HAP-1 (cell line): ENCODE measurements at regions of chr1 and their contacts with region 1.

Region 1: DNA sequence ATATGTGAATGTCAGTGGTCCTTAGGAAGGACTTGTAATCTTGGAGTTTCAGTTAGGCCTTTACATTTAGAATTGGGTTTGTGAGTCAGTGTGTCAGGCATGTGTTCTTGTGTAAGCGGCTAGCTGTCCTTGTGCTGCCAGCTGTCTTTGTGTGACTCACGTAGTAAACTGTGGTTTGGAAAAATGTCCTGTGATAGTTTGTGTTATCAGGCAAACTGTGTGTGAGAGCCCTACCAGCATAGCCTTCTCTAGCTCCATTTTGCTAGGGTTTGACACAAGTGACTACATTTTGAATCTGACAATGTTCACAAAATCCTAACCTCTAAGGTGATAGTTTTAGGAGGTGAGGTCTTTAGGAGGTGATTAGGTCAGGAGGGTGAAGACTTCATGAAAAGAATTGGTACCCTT is 6.9 kb upstream of the SLC35D1 start:
- DNase-seq: no peak
- H3K4me3 ChIP-seq: no peak overlapping the region
- H3K4me1 ChIP-seq: no peaks in the 10 kb centered on the region
- H3K27me3 ChIP-seq: no peaks in the 10 kb centered on the region

Region 2: DNA sequence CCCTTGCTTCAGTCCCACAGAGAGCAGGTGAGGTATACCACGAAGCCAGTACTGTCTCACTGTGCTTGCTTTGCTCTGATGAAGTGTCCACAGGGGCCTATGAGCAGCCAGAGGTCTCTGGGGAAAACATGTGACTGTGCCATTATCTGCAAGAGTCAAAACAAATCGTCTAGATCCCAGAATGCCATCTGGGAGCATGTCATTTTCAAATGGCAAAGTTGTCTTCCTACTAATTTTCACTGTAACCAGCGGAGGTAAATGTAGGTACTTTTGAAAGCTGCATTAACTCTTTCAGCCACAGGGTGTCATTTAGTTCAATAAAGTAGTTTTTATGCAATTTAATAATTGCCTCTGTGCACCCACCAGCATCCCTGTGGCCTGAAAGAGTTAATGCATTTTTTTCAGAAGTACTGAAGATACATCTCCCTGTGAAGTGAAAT is 700.5 kb before region 1 on chr1:
- in situ Hi-C with region 1: no loop called
- DNase-seq: no peak
- H3K4me3 ChIP-seq: no peak overlapping the region
- H3K4me1 ChIP-seq: peaks cover 13% of the 10 kb centered on the region
- H3K27me3 ChIP-seq: no peaks in the 10 kb centered on the region

Region 3: GRCh38 chr1:66791621-66792610 is 268.9 kb before region 1 on chr1:
- in situ Hi-C with region 1: no loop called
- DNase-seq: no peak
- H3K4me3 ChIP-seq: no peak overlapping the region
- H3K4me1 ChIP-seq: no peaks in the 10 kb centered on the region
- H3K27me3 ChIP-seq: peaks cover 3% of the 10 kb centered on the region; the same call in 1 of the 2 replicates

Region 4: GRCh38 chr1:67126111-67126746 is 65.4 kb after region 1 on chr1:
- in situ Hi-C with region 1: loop called (anchors 10 kb)
- DNase-seq: no peak
- H3K4me3 ChIP-seq: no peak overlapping the region
- H3K4me1 ChIP-seq: no peaks in the 10 kb centered on the region; the same call in 1 of the 2 replicates
- H3K27me3 ChIP-seq: no peaks in the 10 kb centered on the region

Region 5: DNA sequence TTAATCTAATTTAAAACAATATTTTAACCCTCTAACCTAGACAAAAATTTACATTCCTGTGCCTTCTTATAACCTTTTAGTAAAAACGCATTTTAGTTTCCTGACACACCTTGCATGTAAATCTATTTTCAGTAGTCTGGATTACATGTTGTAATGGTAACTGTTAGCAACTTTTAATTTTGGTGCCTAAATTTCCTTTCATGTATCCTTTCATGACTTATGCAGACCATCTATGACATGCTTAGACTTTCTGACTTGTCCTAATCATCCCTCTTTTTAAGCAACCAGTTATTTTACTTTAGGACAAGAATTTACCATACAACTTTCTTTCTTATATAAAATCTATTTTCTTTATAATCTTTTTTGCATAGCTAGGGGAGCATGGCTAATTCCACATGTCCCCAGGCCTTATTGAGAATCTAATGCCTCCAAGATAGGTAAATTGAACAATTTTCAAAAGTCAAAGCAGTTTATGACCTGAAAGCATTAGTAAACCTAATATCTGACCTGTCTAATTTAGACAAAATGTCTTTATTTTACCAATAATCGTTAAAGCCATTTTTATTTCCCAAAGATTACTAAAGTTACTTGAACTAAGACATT is 189.3 kb after region 1 on chr1:
- in situ Hi-C with region 1: no loop called
- DNase-seq: no peak
- H3K4me3 ChIP-seq: no peak overlapping the region
- H3K4me1 ChIP-seq: no peaks in the 10 kb centered on the region
- H3K27me3 ChIP-seq: no peaks in the 10 kb centered on the region